Aorta (tissue), 5 donors: ENCODE measurements at regions of chr7 and their contacts with region 1.

Region 1: GRCh38 chr7:1473864-1474512 is 14.7 kb upstream of the MICALL2 start:
- DNase-seq: peak; percentile 92 to 97
- ATAC-seq: peak; percentile 81
- H3K4me3 ChIP-seq: no peak overlapping the region
- H3K27ac ChIP-seq: no peak overlapping the region
- H3K4me1 ChIP-seq: no peaks in the 10 kb centered on the region
- H3K27me3 ChIP-seq: no peaks in the 10 kb centered on the region

Region 2: GRCh38 chr7:1225441-1226185 is 248.4 kb before region 1 on chr7:
- intact Hi-C with region 1: loop called in 1 of 2 experiments (anchors 5 kb)
- DNase-seq: peak in 1 of 2 donors; percentile 83
- ATAC-seq: peak; percentile 55
- H3K4me3 ChIP-seq: no peak overlapping the region
- H3K27ac ChIP-seq: no peak overlapping the region
- H3K4me1 ChIP-seq: no peaks in the 10 kb centered on the region
- H3K27me3 ChIP-seq: no peaks in the 10 kb centered on the region

Region 3: DNA sequence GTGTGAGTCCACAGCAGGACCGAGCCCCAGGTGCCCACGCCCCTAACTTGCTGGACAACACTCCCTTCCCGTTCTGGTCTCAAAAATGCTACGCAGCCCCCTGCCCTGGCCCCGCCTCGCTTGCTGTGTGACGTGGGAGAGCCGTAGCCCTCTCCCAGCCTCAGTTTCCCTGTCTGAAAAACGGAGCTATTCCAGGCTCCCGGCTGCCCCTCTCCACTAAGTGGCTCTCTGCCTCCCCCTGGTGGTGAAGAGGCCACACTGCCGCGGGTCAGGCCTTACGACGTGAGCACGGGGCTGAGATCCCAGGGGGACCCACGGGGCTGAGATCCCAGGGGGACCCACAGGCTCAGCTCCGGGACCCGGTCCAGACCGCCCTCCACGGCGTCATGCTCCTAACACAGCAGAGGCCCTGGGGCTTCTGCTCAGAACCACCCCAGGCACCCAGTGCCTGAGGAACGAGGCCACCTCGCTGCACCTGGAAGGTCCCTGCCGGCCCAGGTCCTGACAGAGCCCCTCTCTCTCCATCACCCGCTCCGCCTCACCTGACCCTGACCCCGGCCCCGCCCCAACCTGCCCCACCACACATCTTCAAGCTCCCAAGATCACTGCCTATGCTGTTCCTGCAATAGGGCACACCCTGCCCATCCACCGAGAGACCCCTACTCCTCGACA is 41.4 kb before region 1 on chr7:
- intact Hi-C with region 1: loop called (anchors 2 to 5 kb)
- DNase-seq: peak; percentile 79 to 95
- ATAC-seq: peak; percentile 80
- H3K4me3 ChIP-seq: no peak overlapping the region
- H3K27ac ChIP-seq: no peak overlapping the region
- H3K4me1 ChIP-seq: no peaks in the 10 kb centered on the region
- H3K27me3 ChIP-seq: no peaks in the 10 kb centered on the region